Psoas muscle (tissue), 8 donors: ENCODE measurements at regions of chr15 and their contacts with region 1.

Region 1: GRCh38 chr15:59372352-59373211 is at the start of gene MYO1E:
- DNase-seq: peak; percentile 81 to 90
- ATAC-seq: peak; percentile 96 to 97 (median 96)
- H3K4me3 ChIP-seq: peak within 1 kb of the TSS; percentile 81
- H3K27ac ChIP-seq: peak within 1 kb of the TSS; percentile 98
- H3K4me1 ChIP-seq: peaks cover 6% of the 10 kb centered on the region
- H3K27me3 ChIP-seq: no peaks in the 10 kb centered on the region
- CTCF ChIP-seq: no peak
- total RNA-seq, gene MYO1E: 26.3 to 53.7 (median 38.2) TPM

Region 2: GRCh38 chr15:59247364-59247763 is 125.2 kb before region 1 on chr15:
- intact Hi-C with region 1: loop called (anchors 5 to 10 kb)
- DNase-seq: peak in 1 of 2 donors; percentile 54
- ATAC-seq: peak; percentile 51 to 74 (median 68)
- H3K4me3 ChIP-seq: no peak overlapping the region
- H3K27ac ChIP-seq: no peak overlapping the region
- H3K4me1 ChIP-seq: no peaks in the 10 kb centered on the region
- H3K27me3 ChIP-seq: no peaks in the 10 kb centered on the region
- CTCF ChIP-seq: peak; percentile 61

Region 3: GRCh38 chr15:59299929-59300617 is 72.5 kb before region 1 on chr15:
- intact Hi-C with region 1: loop called in 1 of 2 experiments (anchors 5 kb)
- DNase-seq: peak; percentile 75 to 82
- ATAC-seq: peak; percentile 77 to 86 (median 80)
- H3K4me3 ChIP-seq: peak overlapping the region; percentile 12
- H3K27ac ChIP-seq: peak overlapping the region; percentile 53
- H3K4me1 ChIP-seq: peaks cover 48% of the 10 kb centered on the region
- H3K27me3 ChIP-seq: no peaks in the 10 kb centered on the region
- CTCF ChIP-seq: no peak

Region 4: GRCh38 chr15:59437817-59438562 is 65.4 kb after region 1 on chr15 and contains the start of gene FAM81A:
- intact Hi-C with region 1: loop called in 1 of 2 experiments (anchors 5 kb)
- DNase-seq: peak; percentile 83 to 92
- ATAC-seq: peak; percentile 95 to 100 (median 98)
- H3K4me3 ChIP-seq: peak within 1 kb of the TSS; percentile 68
- H3K27ac ChIP-seq: no peak within 1 kb of the TSS
- H3K4me1 ChIP-seq: peaks cover 8% of the 10 kb centered on the region
- H3K27me3 ChIP-seq: no peaks in the 10 kb centered on the region
- CTCF ChIP-seq: no peak
- total RNA-seq, gene FAM81A: 0.32 to 1.2 (median 0.35) TPM

Region 5: DNA sequence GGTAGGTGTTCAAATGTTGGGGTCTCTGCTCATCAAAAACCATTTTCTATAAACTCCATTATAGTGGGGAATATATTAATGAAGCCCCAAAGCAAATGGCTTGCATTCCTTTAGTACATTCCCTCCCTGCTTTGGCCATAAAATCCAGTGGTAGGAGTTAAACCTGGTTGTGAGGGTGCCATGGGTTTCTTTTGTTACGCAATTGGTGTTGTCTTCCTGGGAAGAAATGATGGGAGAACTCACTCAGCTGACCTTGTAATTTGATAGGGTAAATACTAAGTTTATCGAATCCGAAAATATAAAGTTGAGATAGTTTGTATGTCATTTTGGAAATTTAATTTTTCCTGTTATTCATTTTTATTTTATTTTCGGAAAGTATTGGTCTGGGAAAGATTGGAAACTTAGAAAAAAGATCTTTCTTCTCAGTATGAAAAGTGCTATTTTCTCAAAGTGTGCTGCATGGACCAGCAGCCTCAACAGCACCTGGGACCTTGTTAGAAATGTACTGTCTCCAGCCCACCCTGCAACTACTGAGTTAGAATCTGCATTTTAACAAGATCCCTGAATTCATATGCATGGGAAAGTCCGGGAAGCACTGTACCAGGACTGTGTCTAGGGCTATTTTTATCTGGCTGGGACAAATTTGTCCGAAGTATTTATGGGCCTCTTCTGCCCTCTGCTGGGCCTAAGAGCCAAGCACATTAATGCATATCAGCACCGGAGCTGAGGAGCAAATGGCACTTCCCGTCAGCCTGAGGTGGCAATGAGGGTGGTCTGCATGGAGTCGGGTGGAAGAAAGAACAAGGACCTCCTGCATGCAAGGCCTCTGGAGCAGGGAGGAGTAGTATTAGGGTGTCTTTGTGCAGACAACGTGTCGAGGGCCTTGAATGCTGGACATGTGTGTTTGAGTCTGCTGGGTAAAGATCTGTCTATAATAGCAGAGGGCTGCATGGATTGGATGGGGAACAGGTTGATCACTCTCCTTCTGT is 120.1 kb after region 1 on chr15:
- intact Hi-C with region 1: no loop called
- DNase-seq: peak; percentile 46 to 64
- ATAC-seq: peak; percentile 94 to 100 (median 98)
- H3K4me3 ChIP-seq: peak overlapping the region; percentile 17
- H3K27ac ChIP-seq: no peak overlapping the region
- H3K4me1 ChIP-seq: no peaks in the 10 kb centered on the region
- H3K27me3 ChIP-seq: no peaks in the 10 kb centered on the region
- CTCF ChIP-seq: peak; percentile 83

Region 6: GRCh38 chr15:59622289-59622688 is 249.7 kb after region 1 on chr15:
- intact Hi-C with region 1: no loop called
- DNase-seq: no peak
- ATAC-seq: no peak
- H3K4me3 ChIP-seq: no peak overlapping the region
- H3K27ac ChIP-seq: no peak overlapping the region
- H3K4me1 ChIP-seq: no peaks in the 10 kb centered on the region
- H3K27me3 ChIP-seq: peaks cover 0 to 7% (median 3%) of the 10 kb centered on the region in 3 donors
- CTCF ChIP-seq: no peak